ENCODE measurements at regions of chr5 and their contacts with region 1.

Region 1: DNA sequence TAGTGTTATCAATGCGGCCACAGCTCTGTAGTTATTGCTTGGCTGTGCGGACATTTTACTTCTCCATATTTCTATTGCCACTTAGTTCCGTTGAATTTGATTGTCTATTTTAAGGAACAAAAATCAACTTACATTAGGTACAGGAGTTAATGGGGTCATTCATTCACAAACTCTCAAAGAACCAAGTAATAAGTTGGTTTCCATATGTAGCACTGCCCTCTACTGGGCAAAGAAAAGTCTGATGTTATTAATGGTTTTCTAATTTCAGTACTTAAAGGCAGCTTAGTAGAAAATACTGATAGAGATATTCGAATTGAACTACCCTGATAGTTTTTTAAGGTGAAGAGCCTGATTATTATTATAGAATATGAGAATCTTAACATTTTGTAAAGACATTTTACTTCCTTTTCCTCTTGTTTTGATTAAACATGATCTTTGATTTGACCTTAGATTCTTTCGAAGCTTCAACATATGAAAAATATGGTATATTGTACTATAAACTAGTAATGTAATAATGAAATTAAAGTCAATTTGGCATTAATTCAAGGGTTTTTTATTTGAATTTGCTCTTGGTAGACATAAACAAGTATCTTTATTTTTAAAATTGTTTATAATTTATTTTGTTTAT is 119.5 kb upstream of the CTNND2 start:
- DNase-seq: no peak
- H3K4me3 Mint-ChIP-seq: no peak overlapping the region
- H3K27ac Mint-ChIP-seq: no peak overlapping the region
- H3K4me1 Mint-ChIP-seq: no peaks in the 10 kb centered on the region
- H3K27me3 Mint-ChIP-seq: no peaks in the 10 kb centered on the region

Region 2: GRCh38 chr5:10452768-10453331 is 1570.9 kb before region 1 on chr5:
- CTCF ChIA-PET with region 1: no interaction called
- POLR2A ChIA-PET with region 1: no interaction called
- intact Hi-C with region 1: loop called (anchors 5 kb)
- DNase-seq: no peak
- H3K4me3 Mint-ChIP-seq: no peak overlapping the region
- H3K27ac Mint-ChIP-seq: no peak overlapping the region
- H3K4me1 Mint-ChIP-seq: peaks cover 5% of the 10 kb centered on the region
- H3K27me3 Mint-ChIP-seq: no peaks in the 10 kb centered on the region

Region 3: GRCh38 chr5:10863763-10864383 is 1159.9 kb before region 1 on chr5:
- CTCF ChIA-PET with region 1: interaction called, 4 read pairs
- POLR2A ChIA-PET with region 1: no interaction called
- intact Hi-C with region 1: loop called (anchors 5 kb)
- DNase-seq: peak; percentile 70
- H3K4me3 Mint-ChIP-seq: no peak overlapping the region
- H3K27ac Mint-ChIP-seq: no peak overlapping the region
- H3K4me1 Mint-ChIP-seq: peaks cover 2% of the 10 kb centered on the region
- H3K27me3 Mint-ChIP-seq: peaks cover 3% of the 10 kb centered on the region

Region 4: DNA sequence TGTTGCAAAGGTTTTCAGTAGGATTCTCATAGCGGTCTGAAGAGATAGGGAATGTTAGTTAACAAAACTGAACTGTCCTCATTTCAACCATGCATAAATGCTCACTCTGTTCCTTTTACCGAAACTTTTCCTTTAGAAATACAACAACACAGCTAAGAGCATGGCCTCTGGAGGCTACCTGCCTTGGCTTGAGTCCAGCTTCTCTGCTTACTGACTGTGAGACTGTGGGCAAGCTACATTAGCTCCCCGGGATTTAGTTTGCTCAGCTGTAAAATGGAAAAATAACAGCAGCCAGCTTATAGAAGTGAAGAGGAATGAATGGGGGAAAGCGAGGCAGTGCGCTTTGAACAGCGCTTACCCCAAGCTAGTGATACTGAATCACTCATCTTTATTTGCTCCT is 754.8 kb before region 1 on chr5:
- CTCF ChIA-PET with region 1: no interaction called
- POLR2A ChIA-PET with region 1: no interaction called
- intact Hi-C with region 1: loop called (anchors 5 kb)
- DNase-seq: no peak
- H3K4me3 Mint-ChIP-seq: no peak overlapping the region
- H3K27ac Mint-ChIP-seq: no peak overlapping the region
- H3K4me1 Mint-ChIP-seq: no peaks in the 10 kb centered on the region
- H3K27me3 Mint-ChIP-seq: peaks cover 8% of the 10 kb centered on the region

Region 5: GRCh38 chr5:12109084-12109708 is 85.5 kb after region 1 on chr5:
- CTCF ChIA-PET with region 1: no interaction called
- POLR2A ChIA-PET with region 1: no interaction called
- intact Hi-C with region 1: no loop called
- DNase-seq: no peak
- H3K4me3 Mint-ChIP-seq: no peak overlapping the region
- H3K27ac Mint-ChIP-seq: no peak overlapping the region
- H3K4me1 Mint-ChIP-seq: no peaks in the 10 kb centered on the region
- H3K27me3 Mint-ChIP-seq: no peaks in the 10 kb centered on the region